ENCODE measurements at regions of chr11 and their contacts with region 1.

Region 1: GRCh38 chr11:1652771-1653540 is 23.4 kb downstream of the KRTAP5-5 start:
- DNase-seq: peak; percentile 94
- ATAC-seq: peak; percentile 75

Region 2: DNA sequence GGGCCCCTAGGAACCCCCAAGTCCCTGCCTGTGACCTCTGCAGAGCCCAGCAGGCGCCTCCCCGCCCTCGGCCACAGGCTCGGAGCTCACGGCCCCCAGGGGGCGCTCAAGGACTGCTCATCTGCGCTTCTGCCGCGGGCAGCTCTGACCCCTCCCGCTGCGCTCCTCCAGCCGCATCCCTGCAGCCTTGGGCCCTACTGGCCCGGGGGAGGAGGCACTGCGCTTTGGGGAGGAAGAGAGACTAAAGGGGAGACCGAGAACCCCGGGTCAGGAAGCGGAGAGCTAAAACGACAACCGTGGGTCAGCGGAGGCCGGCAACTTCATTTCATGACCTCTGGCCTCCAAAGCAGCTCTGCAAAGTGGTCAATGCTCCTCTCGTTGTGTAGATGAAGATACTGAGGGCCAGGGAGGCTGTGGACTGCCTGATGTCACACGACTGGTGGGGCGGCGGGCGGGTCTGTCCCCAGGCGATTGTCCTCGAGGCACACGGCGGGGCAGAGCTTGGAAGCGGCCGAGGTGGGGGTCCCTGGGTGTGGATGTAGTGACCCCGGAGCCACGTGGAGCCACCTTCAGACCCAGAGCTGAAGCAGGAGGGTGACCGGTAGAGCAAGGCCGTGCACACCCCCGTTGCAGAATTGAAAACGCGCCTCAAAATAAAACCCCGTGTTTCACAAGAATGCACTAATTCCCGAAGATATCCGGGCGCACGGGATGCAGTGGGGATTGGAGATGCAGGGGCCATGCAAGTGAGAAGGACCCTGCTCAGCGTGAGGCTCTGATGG is 41.3 kb after region 1 on chr11:
- intact Hi-C with region 1: loop called (anchors 5 kb)
- DNase-seq: peak; percentile 94
- ATAC-seq: peak; percentile 96

Region 3: DNA sequence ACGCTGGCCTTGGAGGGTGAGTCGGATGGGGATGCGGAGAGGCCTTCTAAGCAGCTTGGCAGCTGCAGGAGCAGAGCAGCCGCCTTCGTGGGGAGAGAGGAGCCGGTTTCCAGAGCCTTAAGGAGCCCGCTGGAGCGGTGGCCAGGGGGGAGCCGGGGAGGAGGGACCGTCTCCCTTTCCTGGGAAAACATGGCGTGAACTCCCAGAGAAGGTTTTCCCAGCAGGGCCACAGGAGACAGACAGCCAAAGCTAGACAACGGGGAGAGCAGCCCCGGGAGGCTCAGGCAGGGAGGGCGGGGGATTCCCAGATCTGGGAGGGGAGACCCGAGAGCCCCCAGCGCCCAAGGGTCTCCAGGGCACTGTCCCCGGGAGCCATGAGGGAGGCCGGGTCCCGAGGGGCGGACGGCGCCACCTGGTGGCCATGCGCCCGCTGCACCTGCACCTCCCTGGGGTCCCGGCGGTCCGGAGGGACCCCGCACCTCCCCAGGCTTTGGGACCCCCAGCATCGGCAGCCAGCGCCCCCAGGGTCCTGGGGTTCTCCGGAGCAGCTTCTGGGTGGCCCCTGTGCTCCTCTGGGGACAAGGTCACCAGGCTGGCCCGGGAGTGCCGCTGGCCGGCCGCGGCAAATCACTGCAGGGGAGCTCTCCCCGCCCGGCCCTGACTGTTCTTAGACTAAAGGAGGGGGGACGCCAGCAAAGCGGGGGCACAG is 179.4 kb after region 1 on chr11:
- intact Hi-C with region 1: loop called (anchors 1 kb)
- DNase-seq: peak; percentile 83
- ATAC-seq: peak; percentile 80